ENCODE measurements at regions of chr17 and their contacts with region 1.

Region 1: DNA sequence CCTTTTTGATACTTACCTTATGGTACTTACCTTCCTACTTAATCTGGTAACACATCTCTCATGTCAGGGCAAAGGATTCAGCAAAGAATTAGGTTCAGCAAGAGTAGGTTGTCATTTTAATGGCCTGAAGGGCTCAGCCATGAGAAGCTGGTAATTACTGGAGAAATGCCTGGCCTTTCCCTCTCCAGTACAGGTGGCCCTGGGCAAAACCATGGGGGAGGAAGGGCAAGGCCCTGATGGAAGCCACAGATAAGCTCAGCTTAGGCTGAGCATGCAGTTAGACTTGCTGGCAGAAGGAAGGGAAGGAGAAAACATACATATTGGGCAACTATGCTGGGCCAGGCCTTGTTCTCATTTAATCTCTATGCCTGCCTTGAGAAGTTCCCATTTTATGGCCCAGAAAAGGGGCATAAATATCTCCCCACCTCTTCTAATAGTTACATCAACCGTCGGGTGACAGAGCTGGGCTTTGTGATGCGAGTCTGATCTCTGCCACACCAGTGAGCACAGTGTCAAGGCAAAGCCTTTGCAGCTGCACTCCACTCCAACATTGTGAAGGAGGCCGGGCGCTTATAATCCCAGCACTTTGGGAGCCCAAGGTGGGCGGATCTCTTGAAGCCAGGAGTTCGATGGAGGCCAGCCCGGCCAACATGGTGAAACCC is 18.7 kb downstream of the CYB5D2 start:
- DNase-seq: no peak
- H3K4me3 ChIP-seq: no peak overlapping the region
- CTCF ChIP-seq: no peak

Region 2: GRCh38 chr17:3773511-3773910 is 388.2 kb before region 1 on chr17:
- CTCF ChIA-PET with region 1: no interaction called
- POLR2A ChIA-PET with region 1: no interaction called
- DNase-seq: no peak
- H3K4me3 ChIP-seq: no peak overlapping the region
- CTCF ChIP-seq: no peak

Region 3: DNA sequence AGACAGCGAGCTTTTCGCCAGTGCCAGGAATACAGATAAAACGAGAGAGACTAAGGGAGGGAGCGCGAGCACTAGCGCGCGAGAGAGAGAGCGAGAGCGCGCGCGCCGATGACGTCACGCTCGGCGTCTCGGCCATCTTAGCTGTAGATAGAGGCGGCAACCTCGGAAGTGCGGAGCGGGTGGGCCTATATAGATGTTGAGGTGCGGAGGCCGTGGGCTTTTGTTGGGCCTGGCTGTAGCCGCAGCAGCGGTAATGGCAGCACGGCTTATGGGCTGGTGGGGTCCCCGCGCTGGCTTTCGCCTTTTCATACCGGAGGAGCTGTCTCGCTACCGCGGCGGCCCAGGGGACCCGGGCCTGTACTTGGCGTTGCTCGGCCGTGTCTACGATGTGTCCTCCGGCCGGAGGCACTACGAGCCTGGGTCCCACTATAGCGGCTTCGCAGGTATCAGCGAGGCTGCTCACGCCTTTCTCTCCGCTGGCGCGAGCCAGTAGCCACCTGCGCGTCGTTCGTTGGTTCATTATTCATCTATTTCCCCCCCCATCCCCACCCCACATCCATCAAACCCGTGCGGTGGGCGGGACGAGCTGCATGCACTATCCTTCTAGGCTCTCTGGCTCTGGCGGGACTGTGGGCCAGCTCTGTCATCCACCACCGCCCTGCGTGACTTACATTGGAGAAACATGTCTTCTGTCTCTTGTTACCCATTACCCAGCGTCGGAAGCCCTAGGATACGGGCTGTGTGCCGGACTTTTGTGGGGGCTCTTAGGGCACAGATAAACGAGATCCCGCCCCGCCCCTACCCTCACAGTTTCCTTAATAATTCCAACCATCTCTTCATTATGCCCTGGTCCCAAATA is 17.9 kb before region 1 on chr17:
- CTCF ChIA-PET with region 1: no interaction called
- POLR2A ChIA-PET with region 1: interaction called, 19 read pairs
- DNase-seq: peak; percentile 65
- H3K4me3 ChIP-seq: peak overlapping the region; percentile 88
- CTCF ChIP-seq: no peak

Region 4: GRCh38 chr17:4208238-4208637 is 46.5 kb after region 1 on chr17:
- CTCF ChIA-PET with region 1: no interaction called
- POLR2A ChIA-PET with region 1: no interaction called
- DNase-seq: peak; percentile 88
- H3K4me3 ChIP-seq: no peak overlapping the region
- CTCF ChIP-seq: no peak

Region 5: DNA sequence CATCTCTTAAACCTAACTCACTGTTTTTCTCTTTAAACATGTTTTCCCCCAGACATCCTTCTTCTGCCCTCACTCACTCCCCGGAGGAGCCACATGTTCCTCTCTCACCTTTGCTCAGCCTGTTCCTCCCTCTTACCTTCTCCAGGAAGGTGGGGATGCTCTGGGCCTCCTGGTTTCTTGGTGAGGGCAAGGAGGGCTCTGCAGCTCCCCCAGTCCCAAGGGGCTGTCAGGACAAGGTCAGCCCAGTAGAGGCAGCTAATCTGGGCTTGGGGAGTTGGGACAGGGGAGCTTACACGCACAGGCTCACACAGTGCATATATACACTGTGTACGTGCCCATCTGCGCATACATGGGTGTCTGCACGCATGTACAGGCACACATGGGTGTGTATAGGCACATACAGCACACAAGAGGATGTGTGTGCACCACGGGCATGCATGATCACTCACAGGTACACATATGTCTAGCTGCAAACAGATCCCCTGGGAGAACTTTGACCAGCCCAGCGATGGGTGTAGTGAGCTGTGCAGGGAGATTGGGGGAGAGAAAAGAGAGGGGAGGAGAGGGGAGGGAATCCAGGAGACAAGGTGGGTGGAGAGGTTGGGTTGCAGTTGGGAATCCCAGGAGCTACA is 243.5 kb after region 1 on chr17:
- CTCF ChIA-PET with region 1: no interaction called
- POLR2A ChIA-PET with region 1: no interaction called
- DNase-seq: no peak
- H3K4me3 ChIP-seq: no peak overlapping the region
- CTCF ChIP-seq: no peak

Measured in AG04449 (cell line).